Psoas muscle (tissue), 8 donors: ENCODE measurements at regions of chr20 and their contacts with region 1.

Region 1: GRCh38 chr20:23125625-23126191 is 39.6 kb upstream of the CD93 start:
- DNase-seq: peak; percentile 60 to 80
- ATAC-seq: peak; percentile 79 to 89 (median 80)
- H3K4me3 ChIP-seq: no peak overlapping the region
- H3K27ac ChIP-seq: peak overlapping the region; percentile 87
- H3K4me1 ChIP-seq: peaks cover 35% of the 10 kb centered on the region
- H3K27me3 ChIP-seq: no peaks in the 10 kb centered on the region
- CTCF ChIP-seq: no peak

Region 2: DNA sequence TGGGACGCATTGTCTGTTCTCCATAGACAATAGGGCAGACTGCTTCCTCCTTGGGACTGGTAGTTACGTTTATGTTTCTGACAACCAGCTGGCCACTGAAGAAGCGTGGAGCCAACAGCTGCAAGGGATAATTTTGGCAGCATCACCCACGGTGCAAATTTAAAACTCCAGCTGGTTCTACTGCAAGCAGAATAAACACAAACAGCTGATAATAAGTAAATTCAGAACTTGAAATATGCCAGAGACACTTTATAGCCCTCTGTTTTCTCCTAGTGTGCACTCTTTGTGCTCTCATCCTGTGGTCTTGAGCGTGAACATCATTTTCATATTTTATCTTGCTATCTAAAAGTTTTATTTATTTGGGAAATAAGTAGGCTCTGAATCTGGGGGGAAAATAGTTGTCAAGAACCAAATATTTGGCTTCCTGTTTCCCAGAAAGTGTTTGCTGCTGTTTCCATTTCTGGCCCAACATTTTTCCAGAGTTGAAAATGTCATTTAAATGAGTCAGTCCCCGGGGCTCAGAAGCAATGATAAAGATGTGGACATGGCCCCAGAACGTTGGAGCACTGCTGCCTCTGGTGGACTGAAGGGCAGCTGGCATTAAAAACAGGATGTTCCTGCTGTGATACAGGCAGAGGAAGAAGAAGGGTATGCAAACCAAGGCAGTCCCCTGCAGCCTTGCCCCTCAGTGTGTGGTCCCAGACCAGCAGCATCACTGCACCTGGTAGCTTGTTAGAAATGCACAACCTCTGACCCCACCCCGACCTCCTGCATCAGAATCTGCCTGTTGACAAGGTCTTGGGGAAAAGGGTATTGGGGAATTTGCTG is 63.8 kb before region 1 on chr20:
- intact Hi-C with region 1: loop called in 1 of 2 experiments (anchors 2 kb)
- DNase-seq: peak; percentile 44 to 62
- ATAC-seq: peak; percentile 84 to 90 (median 88)
- H3K4me3 ChIP-seq: no peak overlapping the region
- H3K27ac ChIP-seq: peak overlapping the region; percentile 62
- H3K4me1 ChIP-seq: peaks cover 30% of the 10 kb centered on the region
- H3K27me3 ChIP-seq: no peaks in the 10 kb centered on the region
- CTCF ChIP-seq: peak; percentile 47

Region 3: DNA sequence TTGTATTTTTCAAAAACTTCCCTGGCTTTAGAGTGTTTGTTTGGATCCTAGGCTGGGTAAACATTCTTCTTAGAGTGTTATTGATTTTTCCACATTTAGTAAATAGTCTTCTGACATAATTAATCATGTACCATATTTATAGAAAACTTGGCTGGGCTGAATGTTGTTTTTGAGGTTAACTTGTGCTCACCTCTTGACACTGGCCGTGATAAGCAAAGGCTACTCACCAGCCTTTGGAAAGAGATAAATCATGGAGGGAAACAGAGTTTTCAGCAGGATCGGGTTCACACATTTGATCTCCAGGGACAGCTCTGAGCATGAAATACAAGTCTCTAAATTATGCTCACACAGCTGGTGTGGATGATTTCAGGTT is 33.3 kb before region 1 on chr20:
- intact Hi-C with region 1: loop called in 1 of 2 experiments (anchors 2 kb)
- DNase-seq: no peak
- ATAC-seq: peak in 3 of 4 donors; percentile 53 to 76 (median 75)
- H3K4me3 ChIP-seq: no peak overlapping the region
- H3K27ac ChIP-seq: peak overlapping the region; percentile 87
- H3K4me1 ChIP-seq: peaks cover 20% of the 10 kb centered on the region
- H3K27me3 ChIP-seq: no peaks in the 10 kb centered on the region
- CTCF ChIP-seq: no peak